ENCODE measurements at regions of chr5 and their contacts with region 1.

Region 1: GRCh38 chr5:13081116-13081515 is 863.4 kb downstream of the DNAH5 start:
- DNase-seq: no peak

Region 2: GRCh38 chr5:11429254-11429653 is 1651.9 kb before region 1 on chr5:
- intact Hi-C with region 1: loop called in 1 of 2 experiments (anchors 5 kb)
- DNase-seq: no peak

Region 3: GRCh38 chr5:13115476-13115875 is 34.4 kb after region 1 on chr5:
- intact Hi-C with region 1: no loop called
- DNase-seq: no peak

Measured in posterior vena cava (tissue), 2 donors.